Activated CD4-positive, alpha-beta T cell treated with anti-CD3 and anti-CD28 coated beads for 36 hours (primary cell): ENCODE measurements at regions of chr11 and their contacts with region 1.

Region 1: GRCh38 chr11:32333320-32333991 is 101.9 kb downstream of the WT1 start:
- DNase-seq: peak; percentile 58
- ATAC-seq: peak; percentile 64
- H3K4me3 Mint-ChIP-seq: peak overlapping the region; percentile 48
- H3K27ac Mint-ChIP-seq: no peak overlapping the region
- H3K4me1 Mint-ChIP-seq: peaks cover 13% of the 10 kb centered on the region
- H3K27me3 Mint-ChIP-seq: peaks cover 34% of the 10 kb centered on the region

Region 2: DNA sequence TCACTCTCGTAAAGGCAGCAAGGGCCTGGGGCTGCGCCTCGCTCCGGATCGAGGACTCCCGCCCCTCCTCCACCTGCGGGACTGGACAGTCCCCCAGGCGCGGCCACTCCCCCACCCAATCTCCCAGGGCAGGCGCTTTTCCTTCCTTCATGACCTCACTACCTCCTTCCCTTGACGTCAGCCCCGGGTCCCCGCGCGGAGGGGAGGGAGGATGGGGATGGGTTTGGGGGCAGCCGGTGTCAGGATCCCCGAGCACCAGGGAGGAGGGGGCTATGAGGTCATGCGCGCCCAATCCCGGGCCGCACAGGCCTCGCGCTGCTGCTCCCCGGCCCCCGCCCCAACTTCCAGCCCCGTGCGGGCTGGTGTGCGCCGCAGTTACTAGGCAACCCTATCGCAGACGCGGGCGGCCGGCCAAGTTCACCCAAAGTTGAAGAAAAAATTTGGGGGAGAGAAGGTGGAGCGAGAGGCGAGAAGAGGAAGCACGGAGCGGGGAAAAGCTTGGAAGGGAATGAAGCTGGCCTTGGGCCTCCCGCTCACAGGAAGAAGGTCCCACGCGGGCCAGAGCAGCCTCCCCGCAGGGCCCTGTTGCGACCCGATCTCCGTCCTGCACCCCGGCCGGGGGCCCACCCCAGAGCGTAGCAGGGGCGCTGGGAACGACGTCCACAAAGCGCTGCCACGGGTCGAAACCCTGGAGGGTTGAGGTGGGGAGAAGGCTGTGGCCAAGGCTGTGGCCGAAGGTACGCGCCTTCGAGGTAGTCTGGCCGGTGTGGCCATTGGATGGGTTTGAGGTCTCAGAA is 93.6 kb after region 1 on chr11:
- CTCF ChIA-PET with region 1: no interaction called
- POLR2A ChIA-PET with region 1: no interaction called
- intact Hi-C with region 1: loop called in 1 of 2 experiments (anchors 5 kb)
- DNase-seq: peak; percentile 35
- ATAC-seq: no peak
- H3K4me3 Mint-ChIP-seq: no peak overlapping the region
- H3K27ac Mint-ChIP-seq: no peak overlapping the region
- H3K4me1 Mint-ChIP-seq: peaks cover 9% of the 10 kb centered on the region
- H3K27me3 Mint-ChIP-seq: peaks cover 66% of the 10 kb centered on the region

Region 3: DNA sequence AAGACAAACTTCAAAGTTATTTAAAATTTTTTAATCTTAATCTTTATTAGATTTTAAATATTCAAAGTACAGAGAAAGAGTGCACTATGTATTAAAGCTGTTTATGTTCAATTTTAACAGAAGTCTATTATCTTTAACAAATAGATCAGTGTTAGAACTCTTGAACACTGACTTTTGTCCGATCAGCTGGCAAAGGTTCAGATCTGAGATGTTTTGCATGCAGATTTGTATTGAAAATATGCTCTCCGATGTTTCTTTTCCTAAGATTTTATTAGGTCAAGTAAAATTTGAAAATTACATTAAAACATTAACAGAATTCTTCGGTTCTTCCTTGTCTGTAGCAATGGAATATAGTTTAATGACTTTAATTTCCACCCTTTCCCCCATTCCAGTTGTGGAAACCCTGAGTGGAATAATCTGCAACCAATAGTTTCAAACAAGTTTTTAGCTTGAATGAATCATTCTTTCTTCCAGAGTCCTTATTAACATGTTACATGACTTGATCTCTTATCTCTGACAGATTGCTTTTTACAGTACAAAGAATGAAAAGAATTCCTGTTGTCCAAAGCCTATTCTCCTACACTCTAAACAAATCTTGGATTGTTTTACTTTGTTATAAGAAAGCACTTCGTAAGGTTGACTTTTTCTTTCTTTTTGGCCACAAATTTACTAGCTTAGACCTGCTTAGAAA is 694.5 kb after region 1 on chr11:
- CTCF ChIA-PET with region 1: no interaction called
- POLR2A ChIA-PET with region 1: interaction called, 13 read pairs
- intact Hi-C with region 1: no loop called
- DNase-seq: no peak
- ATAC-seq: no peak
- H3K4me3 Mint-ChIP-seq: no peak overlapping the region
- H3K27ac Mint-ChIP-seq: no peak overlapping the region
- H3K4me1 Mint-ChIP-seq: no peaks in the 10 kb centered on the region
- H3K27me3 Mint-ChIP-seq: no peaks in the 10 kb centered on the region